Heart left ventricle (tissue), 16 donors: ENCODE measurements at regions of chr14 and their contacts with region 1.

Region 1: GRCh38 chr14:81382517-81383132 is 17.5 kb downstream of the STON2 start:
- DNase-seq: no peak
- ATAC-seq: no peak
- H3K4me3 ChIP-seq: no peak overlapping the region
- H3K27ac ChIP-seq: no peak overlapping the region
- H3K4me1 ChIP-seq: no peaks in the 10 kb centered on the region
- H3K27me3 ChIP-seq: no peaks in the 10 kb centered on the region
- CTCF ChIP-seq: no peak
- POLR2A ChIP-seq: no peak

Region 2: GRCh38 chr14:81342850-81343580 is 39.6 kb before region 1 on chr14:
- intact Hi-C with region 1: loop called in 1 of 10 experiments (anchors 5 kb)
- DNase-seq: no peak
- ATAC-seq: peak in 1 of 4 donors; percentile 20
- H3K4me3 ChIP-seq: no peak overlapping the region
- H3K27ac ChIP-seq: peak overlapping the region in 5 of 12 donors; percentile 4 to 38 (median 28)
- H3K4me1 ChIP-seq: peaks cover 0 to 21% (median 6%) of the 10 kb centered on the region in 12 donors
- H3K27me3 ChIP-seq: no peaks in the 10 kb centered on the region
- CTCF ChIP-seq: no peak
- POLR2A ChIP-seq: no peak